H1 (cell line): ENCODE measurements at regions of chr16 and their contacts with region 1.

Region 1: GRCh38 chr16:47046726-47047523 is 73.5 kb upstream of the DNAJA2 start:
- DNase-seq: no peak
- H3K4me3 ChIP-seq: no peak overlapping the region
- H3K27ac ChIP-seq: no peak overlapping the region
- H3K4me1 ChIP-seq: peaks cover 0 to 2% (median 0%) of the 10 kb centered on the region in 4 experiments; a peak in 2 of 7 replicates
- H3K27me3 ChIP-seq: no peaks in the 10 kb centered on the region
- CTCF ChIP-seq: no peak
- EP300 ChIP-seq: no peak
- POLR2A ChIP-seq: no peak
- RAD21 ChIP-seq: no peak

Region 2: DNA sequence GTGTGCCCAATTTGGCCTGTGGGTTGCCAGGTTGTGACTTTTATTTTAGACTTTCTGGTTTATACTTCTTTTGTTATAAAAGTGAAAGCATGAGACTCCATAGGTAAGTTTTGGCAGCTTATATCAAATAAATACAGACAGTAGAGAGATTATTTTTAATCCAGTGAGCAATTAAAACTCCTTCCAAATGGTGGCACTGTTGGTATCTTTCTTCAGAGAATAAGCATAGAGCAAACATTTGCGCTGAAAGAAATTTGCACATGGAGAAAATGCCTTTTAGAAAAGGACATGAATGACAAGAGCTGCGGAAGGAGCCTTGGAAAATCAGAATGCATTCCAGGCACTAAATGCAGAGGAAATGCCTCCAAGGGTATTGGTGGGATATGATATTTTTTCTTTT is 27.4 kb before region 1 on chr16:
- CTCF ChIA-PET with region 1: no interaction called
- POLR2A ChIA-PET with region 1: no interaction called
- DNase-seq: no peak
- H3K4me3 ChIP-seq: no peak overlapping the region
- H3K27ac ChIP-seq: no peak overlapping the region
- H3K4me1 ChIP-seq: no peaks in the 10 kb centered on the region
- H3K27me3 ChIP-seq: no peaks in the 10 kb centered on the region
- CTCF ChIP-seq: no peak
- EP300 ChIP-seq: no peak
- POLR2A ChIP-seq: no peak
- RAD21 ChIP-seq: no peak

Region 3: DNA sequence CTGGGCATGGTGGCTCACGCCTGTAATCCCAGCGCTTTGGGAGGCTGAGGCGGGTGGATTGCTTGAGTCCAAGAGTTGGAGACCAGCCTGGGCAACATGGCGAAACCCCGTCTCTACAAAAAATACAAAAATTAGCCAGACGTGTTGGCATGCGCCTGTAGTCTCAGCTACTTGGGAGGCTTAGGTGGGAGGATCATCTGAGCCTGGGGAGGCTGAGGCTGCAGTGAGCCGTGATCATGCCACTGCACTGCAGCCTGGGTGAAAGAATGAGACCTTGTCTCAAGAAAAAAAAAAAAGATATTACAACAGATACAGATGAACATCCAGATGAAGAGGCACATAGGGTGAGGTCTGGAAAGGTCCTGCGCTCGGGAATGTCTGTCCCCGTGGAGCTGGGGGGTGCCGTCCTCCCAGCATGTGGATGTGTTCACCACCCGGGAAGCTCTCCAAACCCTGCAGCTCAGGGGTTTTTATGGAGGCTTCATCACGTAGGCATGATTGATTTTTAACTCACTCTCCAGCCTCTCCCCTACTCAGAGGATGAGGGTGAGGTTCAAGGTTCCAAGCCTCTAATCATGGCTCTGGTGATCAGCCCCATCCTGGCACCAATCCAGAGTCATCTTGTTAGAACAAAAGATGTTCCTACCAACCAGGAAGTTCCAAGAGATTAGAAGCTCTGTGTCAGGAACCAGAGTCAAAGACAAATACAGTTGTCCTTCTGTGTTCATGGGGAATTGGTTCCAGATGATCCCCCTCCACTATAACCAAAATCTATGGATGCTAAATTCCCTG is 11.6 kb after region 1 on chr16:
- CTCF ChIA-PET with region 1: interaction called, 12 read pairs
- POLR2A ChIA-PET with region 1: interaction called, 3 read pairs
- DNase-seq: no peak
- H3K4me3 ChIP-seq: no peak overlapping the region
- H3K27ac ChIP-seq: no peak overlapping the region
- H3K4me1 ChIP-seq: no peaks in the 10 kb centered on the region; a peak in 1 of 7 replicates
- H3K27me3 ChIP-seq: no peaks in the 10 kb centered on the region
- CTCF ChIP-seq: no peak
- EP300 ChIP-seq: no peak
- POLR2A ChIP-seq: no peak
- RAD21 ChIP-seq: no peak